ENCODE measurements at regions of chr16 and their contacts with region 1.

Region 1: DNA sequence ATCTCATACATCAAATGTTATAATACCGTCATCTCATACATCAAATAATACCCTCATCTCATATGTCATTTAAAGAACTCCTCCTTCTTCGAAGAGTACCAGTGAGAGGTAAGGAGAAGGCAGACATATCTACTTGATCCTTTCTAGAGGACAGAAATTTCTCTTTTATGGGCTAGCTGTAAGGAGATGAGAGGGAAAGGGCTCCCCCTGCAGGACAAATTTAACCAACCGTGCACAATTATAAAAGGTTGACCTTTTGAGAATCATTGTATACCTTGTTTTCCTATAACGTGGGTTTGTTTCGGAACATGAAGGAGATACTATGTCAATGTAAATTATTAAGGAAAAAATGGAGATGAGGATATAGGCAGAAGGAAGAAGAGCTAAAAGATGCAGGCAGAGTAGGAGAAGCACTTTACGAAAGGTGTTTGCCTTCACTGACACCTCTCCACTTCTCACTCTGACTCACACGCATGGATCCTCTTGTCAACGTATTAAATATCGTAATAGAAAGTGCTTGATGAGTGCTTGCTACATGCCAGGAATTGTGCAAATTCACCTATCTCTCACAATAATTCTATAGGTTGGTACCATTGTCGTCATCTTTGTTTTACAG is 465.9 kb upstream of the ERCC4 start:
- DNase-seq: no peak
- ATAC-seq: peak; percentile 73
- H3K4me3 ChIP-seq: no peak overlapping the region
- H3K27ac ChIP-seq: no peak overlapping the region
- H3K4me1 ChIP-seq: no peaks in the 10 kb centered on the region
- H3K27me3 ChIP-seq: no peaks in the 10 kb centered on the region; a peak in 1 of 4 replicates
- CTCF ChIP-seq: peak; percentile 45 to 64 (median 51); a peak in 5 of 6 replicates
- EP300 ChIP-seq: no peak
- POLR2A ChIP-seq: no peak
- RAD21 ChIP-seq: peak; percentile 86

Region 2: DNA sequence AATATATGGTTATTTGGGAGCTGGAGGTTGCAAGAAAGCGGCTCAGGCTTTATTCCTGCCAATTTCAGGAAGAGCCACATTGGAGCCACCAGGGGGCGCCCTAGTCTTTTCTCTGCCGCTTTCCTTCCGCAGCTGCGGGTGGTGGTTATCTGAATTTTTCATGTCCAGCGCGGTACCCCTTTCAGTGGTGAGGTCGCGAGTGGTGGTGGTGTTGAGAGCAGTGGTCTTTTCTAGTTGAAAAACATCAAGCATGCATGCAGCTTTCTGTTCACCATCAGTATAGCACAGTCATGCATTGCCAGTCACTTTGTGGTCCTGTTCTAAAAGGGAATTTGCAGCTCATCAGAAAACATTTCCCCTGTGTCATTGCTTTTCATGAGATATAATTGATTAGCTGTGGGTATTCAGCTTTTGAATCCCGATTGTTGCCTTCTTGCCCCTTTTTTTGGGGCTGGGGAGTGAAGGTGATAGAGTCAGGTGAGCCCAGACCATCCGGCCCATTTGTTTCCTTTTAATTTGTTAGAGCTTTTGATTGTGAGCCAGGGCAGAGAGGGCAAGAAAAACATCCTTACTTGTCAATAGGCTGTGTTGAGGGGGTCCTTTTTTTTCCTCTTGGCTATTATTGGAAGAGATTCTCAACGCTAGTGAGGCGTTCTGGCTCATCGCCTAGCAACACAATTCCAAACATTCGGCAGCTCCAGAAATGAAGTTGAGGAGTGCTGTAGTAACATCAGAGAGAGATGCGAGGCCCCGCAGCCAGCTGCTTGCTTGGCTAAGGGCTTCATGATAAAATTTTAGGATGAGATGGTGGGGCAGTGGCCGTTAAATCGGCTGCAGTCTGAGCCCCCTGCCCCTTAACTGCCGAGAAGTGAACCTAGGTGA is 1358.5 kb before region 1 on chr16:
- CTCF ChIA-PET with region 1: no interaction called
- POLR2A ChIA-PET with region 1: no interaction called
- RAD21 ChIA-PET with region 1: no interaction called
- SMC1A ChIA-PET with region 1: no interaction called
- in situ Hi-C with region 1: loop called (anchors 10 kb)
- intact Hi-C with region 1: no loop called
- DNase-seq: no peak
- ATAC-seq: peak; percentile 82
- H3K4me3 ChIP-seq: no peak overlapping the region
- H3K27ac ChIP-seq: no peak overlapping the region
- H3K4me1 ChIP-seq: no peaks in the 10 kb centered on the region
- H3K27me3 ChIP-seq: no peaks in the 10 kb centered on the region
- CTCF ChIP-seq: peak; percentile 77 to 84 (median 84)
- EP300 ChIP-seq: no peak
- POLR2A ChIP-seq: no peak
- RAD21 ChIP-seq: peak; percentile 74

Region 3: GRCh38 chr16:13056607-13057006 is 397.4 kb before region 1 on chr16:
- CTCF ChIA-PET with region 1: interaction called, 3 read pairs
- POLR2A ChIA-PET with region 1: no interaction called
- RAD21 ChIA-PET with region 1: interaction called, 3 read pairs
- SMC1A ChIA-PET with region 1: interaction called, 11 read pairs
- in situ Hi-C with region 1: no loop called
- intact Hi-C with region 1: no loop called
- DNase-seq: peak; percentile 45
- ATAC-seq: peak; percentile 93
- H3K4me3 ChIP-seq: no peak overlapping the region
- H3K27ac ChIP-seq: no peak overlapping the region
- H3K4me1 ChIP-seq: no peaks in the 10 kb centered on the region
- H3K27me3 ChIP-seq: no peaks in the 10 kb centered on the region
- CTCF ChIP-seq: no peak
- EP300 ChIP-seq: peak; percentile 34 to 80; a peak in 3 of 4 replicates
- POLR2A ChIP-seq: no peak
- RAD21 ChIP-seq: no peak

Region 4: GRCh38 chr16:13332713-13333255 is 121.3 kb before region 1 on chr16:
- CTCF ChIA-PET with region 1: interaction called, 3 read pairs
- POLR2A ChIA-PET with region 1: no interaction called
- RAD21 ChIA-PET with region 1: interaction called, 11 read pairs
- SMC1A ChIA-PET with region 1: interaction called, 12 read pairs
- in situ Hi-C with region 1: no loop called
- intact Hi-C with region 1: no loop called
- DNase-seq: no peak
- ATAC-seq: no peak
- H3K4me3 ChIP-seq: no peak overlapping the region
- H3K27ac ChIP-seq: no peak overlapping the region
- H3K4me1 ChIP-seq: peaks cover 5% of the 10 kb centered on the region
- H3K27me3 ChIP-seq: no peaks in the 10 kb centered on the region
- CTCF ChIP-seq: peak in 1 of 3 experiments; percentile 12; a peak in 1 of 6 replicates
- EP300 ChIP-seq: no peak
- POLR2A ChIP-seq: no peak
- RAD21 ChIP-seq: peak; percentile 57

Region 5: DNA sequence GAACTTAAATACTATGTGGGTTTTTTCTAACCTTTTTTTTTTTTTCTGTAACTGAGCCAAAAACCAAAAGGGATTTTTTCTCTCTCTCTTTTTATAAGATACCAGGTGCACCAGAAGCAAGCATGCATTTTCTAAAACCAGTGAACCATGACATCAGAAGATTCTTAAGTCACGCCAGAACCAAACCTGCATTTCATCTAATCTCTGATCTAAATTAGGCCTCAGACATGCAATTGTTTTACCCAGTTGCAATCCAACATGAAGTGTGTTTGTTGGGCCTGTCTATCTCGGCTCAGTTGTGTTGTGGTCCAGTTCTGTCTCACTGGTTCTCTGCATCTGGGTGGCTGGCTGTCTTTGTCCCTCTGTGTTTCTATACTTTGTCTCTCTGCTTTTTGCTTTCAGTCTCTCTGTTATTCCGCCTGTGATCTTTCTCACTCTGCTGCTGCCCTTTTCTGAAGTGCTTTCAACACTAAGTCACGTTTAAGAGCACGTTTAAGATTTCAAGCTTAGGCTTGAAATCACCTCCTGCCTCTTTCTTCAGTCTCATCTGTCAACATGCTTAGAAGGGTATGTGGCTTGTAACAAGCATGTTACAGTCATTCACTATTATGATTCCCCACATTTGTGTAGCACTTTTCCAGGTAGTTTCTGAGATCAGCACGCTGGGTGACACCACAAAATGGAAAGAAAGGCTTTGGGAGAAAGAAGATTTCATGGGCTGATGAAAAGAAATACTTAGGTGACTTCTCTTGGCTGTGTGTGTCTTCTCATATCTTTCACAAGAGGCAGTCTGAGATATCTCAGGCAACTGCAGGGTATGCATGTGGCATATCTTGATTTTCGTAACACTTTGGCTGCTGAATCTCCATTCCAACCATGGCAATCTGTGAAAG is 63.7 kb before region 1 on chr16:
- CTCF ChIA-PET with region 1: interaction called, 11 read pairs
- POLR2A ChIA-PET with region 1: interaction called, 3 read pairs
- RAD21 ChIA-PET with region 1: interaction called, 9 read pairs
- SMC1A ChIA-PET with region 1: interaction called, 14 read pairs
- in situ Hi-C with region 1: no loop called
- intact Hi-C with region 1: no loop called
- DNase-seq: peak; percentile 88
- ATAC-seq: peak; percentile 84
- H3K4me3 ChIP-seq: 0 out of 2 replicates have a peak overlapping the region, but pooled peaks have one; percentile 25
- H3K27ac ChIP-seq: peak overlapping the region; percentile 90
- H3K4me1 ChIP-seq: peaks cover 28% of the 10 kb centered on the region
- H3K27me3 ChIP-seq: no peaks in the 10 kb centered on the region
- CTCF ChIP-seq: no peak
- EP300 ChIP-seq: peak; percentile 76 to 80; a peak in 2 of 4 replicates
- POLR2A ChIP-seq: peak; percentile 34; the same call in 1 of the 2 replicates
- RAD21 ChIP-seq: peak; percentile 13; the same call in 1 of the 2 replicates

Region 6: DNA sequence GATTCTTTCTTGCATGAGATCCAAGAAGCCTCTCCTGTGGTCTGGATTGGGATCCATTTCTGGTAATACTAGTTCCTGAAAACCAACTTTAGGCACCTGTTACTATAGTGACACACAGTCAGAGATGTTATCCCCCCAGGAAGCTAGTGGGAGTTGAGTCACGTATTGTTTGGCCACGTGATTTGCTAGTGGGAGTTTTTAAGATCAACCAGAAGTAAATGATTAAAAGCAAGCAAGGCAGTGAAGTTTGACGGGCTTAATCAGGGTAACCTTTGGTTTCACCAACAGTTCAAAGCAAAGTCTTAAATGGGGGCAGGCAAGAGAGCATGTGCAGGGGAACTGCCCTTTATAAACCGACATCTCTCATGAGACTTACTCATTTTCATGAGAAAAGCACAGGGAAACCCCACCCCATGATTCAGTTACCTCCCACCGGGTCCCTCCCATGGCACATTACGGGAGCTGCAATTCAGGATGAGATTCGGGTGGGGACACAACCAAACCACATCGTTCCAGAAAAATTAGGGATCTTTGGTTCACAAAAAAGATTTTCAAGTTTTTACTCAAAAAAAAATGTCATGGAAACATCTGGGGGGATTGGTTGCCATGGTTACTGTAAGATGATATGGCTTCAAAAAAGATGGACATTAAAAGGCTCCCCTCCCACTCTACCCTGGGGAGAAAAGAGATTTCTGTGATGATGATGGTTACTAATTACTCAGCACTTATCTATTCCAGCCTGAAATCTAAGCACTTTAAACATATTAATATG is 17.2 kb before region 1 on chr16:
- CTCF ChIA-PET with region 1: interaction called, 53 read pairs
- POLR2A ChIA-PET with region 1: interaction called, 6 read pairs
- RAD21 ChIA-PET with region 1: interaction called, 60 read pairs
- SMC1A ChIA-PET with region 1: interaction called, 105 read pairs
- in situ Hi-C with region 1: no loop called
- intact Hi-C with region 1: no loop called
- DNase-seq: peak; percentile 86
- ATAC-seq: peak; percentile 85
- H3K4me3 ChIP-seq: no peak overlapping the region
- H3K27ac ChIP-seq: peak overlapping the region; percentile 46
- H3K4me1 ChIP-seq: peaks cover 25% of the 10 kb centered on the region
- H3K27me3 ChIP-seq: no peaks in the 10 kb centered on the region
- CTCF ChIP-seq: no peak; a peak in 1 of 6 replicates
- EP300 ChIP-seq: peak; percentile 53 to 88; a peak in 3 of 4 replicates
- POLR2A ChIP-seq: no peak
- RAD21 ChIP-seq: peak; percentile 13; the same call in 1 of the 2 replicates

Region 7: DNA sequence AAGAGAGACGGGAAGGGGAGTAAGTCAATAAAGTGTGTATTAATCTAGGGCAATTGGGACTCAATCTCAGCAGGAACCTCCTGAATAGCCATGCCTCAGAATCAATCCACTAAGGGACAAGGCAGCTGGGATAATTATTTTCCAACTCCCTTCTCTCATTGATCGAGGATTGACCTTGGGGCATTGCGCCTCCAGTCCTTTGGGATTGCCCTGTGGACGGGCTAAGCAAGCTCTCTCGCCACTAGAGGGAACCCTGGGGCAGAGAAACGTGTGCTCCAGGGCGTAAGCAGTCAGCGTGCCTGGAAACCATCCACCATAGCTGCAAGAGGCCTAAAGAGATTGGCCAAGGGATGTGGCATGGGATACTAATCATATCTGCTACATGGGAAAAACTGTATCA is 412.0 kb after region 1 on chr16:
- CTCF ChIA-PET with region 1: no interaction called
- POLR2A ChIA-PET with region 1: no interaction called
- RAD21 ChIA-PET with region 1: no interaction called
- SMC1A ChIA-PET with region 1: no interaction called
- in situ Hi-C with region 1: no loop called
- intact Hi-C with region 1: no loop called
- DNase-seq: no peak
- ATAC-seq: peak; percentile 99
- H3K4me3 ChIP-seq: no peak overlapping the region
- H3K27ac ChIP-seq: no peak overlapping the region
- H3K4me1 ChIP-seq: no peaks in the 10 kb centered on the region
- H3K27me3 ChIP-seq: no peaks in the 10 kb centered on the region
- CTCF ChIP-seq: peak; percentile 64 to 80 (median 70)
- EP300 ChIP-seq: no peak
- POLR2A ChIP-seq: no peak
- RAD21 ChIP-seq: peak; percentile 46